ENCODE measurements at regions of chr1 and their contacts with region 1.

Region 1: DNA sequence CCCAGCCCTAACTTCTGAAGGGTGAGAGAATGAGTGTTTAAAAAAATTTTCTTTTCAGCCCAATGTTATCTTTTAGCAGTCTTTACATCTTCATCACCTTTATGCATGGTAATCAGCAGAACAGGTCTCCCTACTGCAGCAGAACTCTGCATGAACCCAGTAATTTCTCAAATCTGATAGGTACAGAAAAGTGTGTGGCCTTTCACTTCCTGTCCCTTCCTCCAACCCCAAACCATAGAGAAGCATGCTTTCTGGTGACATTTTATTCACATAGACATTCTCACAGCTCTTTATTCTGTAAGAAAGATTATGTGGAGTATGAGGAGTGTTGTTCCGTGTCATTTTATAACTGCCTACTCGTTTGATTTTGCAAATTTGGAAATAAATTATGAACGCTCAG is 68.6 kb downstream of the RPAP2 start:
- DNase-seq: no peak
- H3K4me3 ChIP-seq: no peak overlapping the region
- H3K4me3 Mint-ChIP-seq: no peak overlapping the region
- H3K27ac Mint-ChIP-seq: no peak overlapping the region
- H3K4me1 ChIP-seq: no peaks in the 10 kb centered on the region
- H3K4me1 Mint-ChIP-seq: no peaks in the 10 kb centered on the region
- H3K27me3 ChIP-seq: no peaks in the 10 kb centered on the region
- H3K27me3 Mint-ChIP-seq: no peaks in the 10 kb centered on the region
- CTCF ChIP-seq: no peak

Region 2: DNA sequence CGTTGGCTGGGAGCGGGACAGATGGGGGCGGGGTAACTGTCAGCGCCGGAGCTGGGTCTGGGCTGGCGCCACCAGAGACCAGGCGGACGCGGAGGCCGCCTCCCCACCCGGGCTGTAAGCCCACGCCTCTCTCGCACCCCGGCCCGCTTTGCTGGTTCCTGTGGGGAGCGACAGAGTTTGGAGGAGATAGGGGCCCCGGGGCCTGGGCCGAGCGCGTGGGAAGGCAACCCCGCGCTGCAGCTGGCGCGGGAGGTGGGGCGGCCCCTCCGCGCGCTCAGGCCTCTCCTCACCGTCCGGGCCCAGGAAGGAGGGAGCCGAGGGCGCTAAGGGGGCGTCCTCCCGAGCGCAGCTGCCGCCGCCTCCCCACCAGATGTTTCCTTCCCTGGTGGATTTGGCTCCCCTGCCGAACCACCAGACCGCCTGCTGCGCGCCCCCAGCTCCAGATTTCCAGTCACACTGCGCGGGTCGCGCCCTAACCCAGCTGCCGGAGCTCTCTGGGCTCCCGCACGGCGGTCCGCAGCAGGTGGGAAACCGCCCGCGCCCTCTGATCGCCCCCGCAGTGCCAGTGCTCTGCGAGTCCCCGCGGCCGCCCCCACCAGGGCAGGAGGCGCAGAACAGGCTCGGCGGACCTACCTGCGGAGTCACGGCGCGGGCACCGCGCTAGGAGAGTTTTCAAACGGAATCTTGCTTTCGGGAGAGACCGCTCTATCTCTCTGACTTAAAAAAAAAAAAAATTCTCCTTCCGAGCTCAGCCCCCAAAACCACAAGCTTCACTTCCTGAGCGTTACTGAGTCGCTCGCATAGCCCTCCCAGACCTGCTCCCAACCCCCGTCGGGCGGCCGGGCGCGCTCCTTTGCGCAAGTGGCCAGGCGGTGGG is 118.1 kb after region 1 on chr1:
- CTCF ChIA-PET with region 1: interaction called, 8 read pairs
- POLR2A ChIA-PET with region 1: no interaction called
- intact Hi-C with region 1: loop called (anchors 10 kb)
- DNase-seq: peak; percentile 68 to 79
- H3K4me3 ChIP-seq: peak overlapping the region; percentile 50
- H3K4me3 Mint-ChIP-seq: peak overlapping the region; percentile 91
- H3K27ac Mint-ChIP-seq: no peak overlapping the region
- H3K4me1 ChIP-seq: no peaks in the 10 kb centered on the region
- H3K4me1 Mint-ChIP-seq: no peaks in the 10 kb centered on the region
- H3K27me3 ChIP-seq: no peaks in the 10 kb centered on the region; the same call in 1 of the 2 replicates
- H3K27me3 Mint-ChIP-seq: no peaks in the 10 kb centered on the region
- CTCF ChIP-seq: peak in 1 of 2 experiments; percentile 45

Region 3: GRCh38 chr1:92511541-92511940 is 144.0 kb after region 1 on chr1:
- CTCF ChIA-PET with region 1: no interaction called
- POLR2A ChIA-PET with region 1: no interaction called
- intact Hi-C with region 1: no loop called
- DNase-seq: no peak
- H3K4me3 ChIP-seq: no peak overlapping the region
- H3K4me3 Mint-ChIP-seq: no peak overlapping the region
- H3K27ac Mint-ChIP-seq: no peak overlapping the region
- H3K4me1 ChIP-seq: no peaks in the 10 kb centered on the region
- H3K4me1 Mint-ChIP-seq: no peaks in the 10 kb centered on the region
- H3K27me3 ChIP-seq: no peaks in the 10 kb centered on the region
- H3K27me3 Mint-ChIP-seq: no peaks in the 10 kb centered on the region
- CTCF ChIP-seq: no peak

Measured in Caco-2 (cell line).